Common myeloid progenitor, CD34-positive (primary cell): ENCODE measurements at regions of chr11 and their contacts with region 1.

Region 1: GRCh38 chr11:46669711-46670139 is 30.7 kb downstream of the ARHGAP1 start:
- DNase-seq: peak; percentile 24 to 68 (median 50)
- H3K4me3 ChIP-seq: peak overlapping the region in 1 of 7 experiments; percentile 2
- H3K27ac ChIP-seq: no peak overlapping the region
- H3K4me1 ChIP-seq: peaks cover 17 to 61% (median 50%) of the 10 kb centered on the region in 4 experiments
- H3K27me3 ChIP-seq: no peaks in the 10 kb centered on the region

Region 2: GRCh38 chr11:46537537-46538295 is 132.0 kb before region 1 on chr11:
- CTCF ChIA-PET with region 1: no interaction called
- POLR2A ChIA-PET with region 1: no interaction called
- DNase-seq: peak; percentile 78 to 91 (median 87)
- H3K4me3 ChIP-seq: no peak overlapping the region
- H3K27ac ChIP-seq: no peak overlapping the region
- H3K4me1 ChIP-seq: peaks cover 0 to 4% (median 0%) of the 10 kb centered on the region in 4 experiments
- H3K27me3 ChIP-seq: no peaks in the 10 kb centered on the region

Region 3: GRCh38 chr11:46682773-46683752 is 13.3 kb after region 1 on chr11:
- CTCF ChIA-PET with region 1: interaction called, 12 read pairs
- POLR2A ChIA-PET with region 1: interaction called, 3 read pairs
- DNase-seq: no peak
- H3K4me3 ChIP-seq: no peak overlapping the region
- H3K27ac ChIP-seq: no peak overlapping the region
- H3K4me1 ChIP-seq: peaks cover 0 to 11% (median 0%) of the 10 kb centered on the region in 4 experiments
- H3K27me3 ChIP-seq: no peaks in the 10 kb centered on the region

Region 4: GRCh38 chr11:46700241-46701077 is 30.7 kb after region 1 on chr11 and contains the starts of genes ARHGAP1 and ZNF408:
- CTCF ChIA-PET with region 1: interaction called, 13 read pairs
- POLR2A ChIA-PET with region 1: interaction called, 13 read pairs
- DNase-seq: peak; percentile 99 to 100 (median 99)
- H3K4me3 ChIP-seq: peak within 1 kb of the TSS; percentile 59 to 100 (median 97)
- H3K27ac ChIP-seq: peak within 1 kb of the TSS; percentile 85 to 96
- H3K4me1 ChIP-seq: peaks cover 3 to 28% (median 26%) of the 10 kb centered on the region in 4 experiments
- H3K27me3 ChIP-seq: no peaks in the 10 kb centered on the region

Region 5: GRCh38 chr11:46710821-46711269 is 41.1 kb after region 1 on chr11:
- CTCF ChIA-PET with region 1: no interaction called
- POLR2A ChIA-PET with region 1: no interaction called
- DNase-seq: no peak
- H3K4me3 ChIP-seq: no peak overlapping the region
- H3K27ac ChIP-seq: no peak overlapping the region
- H3K4me1 ChIP-seq: no peaks in the 10 kb centered on the region
- H3K27me3 ChIP-seq: no peaks in the 10 kb centered on the region

Region 6: DNA sequence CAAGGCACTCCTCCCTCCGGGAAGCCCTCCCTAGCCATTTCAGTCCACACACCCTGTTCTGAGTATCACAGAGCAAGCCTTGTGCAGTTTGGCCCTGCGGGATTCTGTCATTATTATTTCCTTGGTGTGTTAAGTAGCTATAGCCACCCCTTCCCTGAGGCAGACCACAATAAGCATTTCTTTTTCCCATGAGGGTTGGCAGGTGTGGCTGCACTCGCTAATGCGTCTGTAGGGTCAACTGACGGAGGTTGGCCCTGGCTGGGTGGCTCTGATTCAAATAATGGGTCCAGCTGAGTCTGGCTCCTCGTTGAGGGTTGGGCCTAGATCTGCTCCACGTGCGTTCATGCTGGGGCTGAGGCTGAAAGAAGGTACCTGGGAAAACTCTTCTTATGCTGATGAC is 54.4 kb after region 1 on chr11:
- CTCF ChIA-PET with region 1: no interaction called
- POLR2A ChIA-PET with region 1: no interaction called
- DNase-seq: no peak
- H3K4me3 ChIP-seq: no peak overlapping the region
- H3K27ac ChIP-seq: no peak overlapping the region
- H3K4me1 ChIP-seq: no peaks in the 10 kb centered on the region
- H3K27me3 ChIP-seq: no peaks in the 10 kb centered on the region

Region 7: GRCh38 chr11:46800177-46800576 is 130.5 kb after region 1 on chr11:
- CTCF ChIA-PET with region 1: no interaction called
- POLR2A ChIA-PET with region 1: no interaction called
- DNase-seq: no peak
- H3K4me3 ChIP-seq: no peak overlapping the region
- H3K27ac ChIP-seq: no peak overlapping the region
- H3K4me1 ChIP-seq: no peaks in the 10 kb centered on the region
- H3K27me3 ChIP-seq: no peaks in the 10 kb centered on the region